Activated CD4-positive, alpha-beta T cell treated with anti-CD3 and anti-CD28 coated beads, Interleukin-2, amount 10 ng/mL, durations not matched to agents 7 days and 5 days (primary cell): ENCODE measurements at regions of chr1 and their contacts with region 1.

Region 1: DNA sequence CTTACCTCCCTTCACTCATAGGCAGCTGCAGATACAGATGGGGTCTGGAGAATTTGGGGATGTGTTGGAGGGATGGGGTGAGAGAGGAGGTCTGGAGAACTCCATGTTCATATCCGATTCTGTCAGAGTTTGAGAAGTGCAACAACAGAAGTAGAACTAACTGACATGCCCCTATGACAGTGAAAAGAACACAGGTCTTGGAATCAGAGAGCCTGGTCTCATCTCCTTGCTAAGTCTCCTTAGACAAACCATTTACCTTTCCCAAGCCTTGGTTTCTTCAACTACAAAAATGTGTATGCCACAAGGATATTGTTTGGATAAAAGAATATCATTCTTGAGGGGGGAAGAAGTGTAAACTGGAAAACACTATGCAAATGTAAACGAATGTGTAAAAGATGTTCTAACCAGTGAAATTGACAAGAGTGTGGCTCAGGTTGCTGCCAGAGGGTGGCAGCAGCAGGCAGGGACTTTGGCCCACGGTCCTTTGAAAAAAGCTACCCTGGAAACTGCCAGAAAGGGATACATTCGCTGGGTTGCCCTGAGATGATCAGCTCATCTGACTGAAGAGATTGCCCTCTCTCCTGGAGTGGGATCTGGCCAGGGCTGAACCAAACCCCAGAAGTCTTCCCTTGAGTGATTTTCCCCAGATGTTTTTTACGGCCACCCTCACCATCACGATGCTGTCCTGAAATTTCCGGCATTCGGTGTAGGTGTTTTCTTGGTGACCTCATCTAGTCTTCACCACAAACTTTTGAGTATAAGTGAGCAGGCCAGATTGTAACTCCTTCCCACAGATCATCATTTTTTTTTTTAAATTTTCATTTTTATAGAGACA is 17.0 kb upstream of the CD2 start:
- DNase-seq: peak; percentile 84
- H3K4me3 Mint-ChIP-seq: peak overlapping the region; percentile 55
- H3K27ac Mint-ChIP-seq: peak overlapping the region; percentile 93
- H3K4me1 Mint-ChIP-seq: peaks cover 58% of the 10 kb centered on the region
- H3K27me3 Mint-ChIP-seq: no peaks in the 10 kb centered on the region

Region 2: DNA sequence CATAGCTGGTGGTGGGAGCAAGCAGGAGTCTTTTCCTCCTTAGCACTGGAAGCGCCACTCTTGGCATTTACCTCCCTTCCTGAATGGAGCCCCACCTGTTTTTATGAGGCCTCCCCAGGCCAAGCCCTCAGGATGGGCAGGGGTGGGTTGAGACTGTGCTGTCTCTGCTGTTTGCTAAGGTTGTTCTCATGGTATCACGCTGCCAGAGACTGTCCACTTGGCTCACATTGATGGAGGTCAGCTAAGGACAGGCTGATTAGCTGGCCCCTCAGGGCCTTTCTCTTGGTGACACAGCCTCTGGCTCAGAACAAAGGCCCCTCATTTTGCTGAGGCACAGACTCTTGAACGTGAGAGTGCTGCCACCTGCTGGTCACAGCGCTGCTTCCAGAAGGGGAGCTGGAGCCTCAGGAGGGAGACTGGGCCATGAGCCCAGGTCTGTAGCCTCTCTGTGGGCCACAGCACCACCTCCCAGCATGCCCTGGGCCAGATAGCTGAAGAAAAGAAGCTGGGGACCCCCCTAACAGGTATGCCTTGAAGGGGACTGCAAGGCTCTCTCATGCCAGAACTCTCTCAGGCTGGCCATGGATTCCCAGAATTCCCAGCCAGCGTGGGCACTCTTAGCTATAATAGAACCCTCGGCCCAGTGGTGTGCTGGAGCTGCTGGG is 252.0 kb before region 1 on chr1:
- CTCF ChIA-PET with region 1: no interaction called
- POLR2A ChIA-PET with region 1: no interaction called
- DNase-seq: peak; percentile 88
- H3K4me3 Mint-ChIP-seq: no peak overlapping the region
- H3K27ac Mint-ChIP-seq: no peak overlapping the region
- H3K4me1 Mint-ChIP-seq: peaks cover 6% of the 10 kb centered on the region
- H3K27me3 Mint-ChIP-seq: peaks cover 3% of the 10 kb centered on the region

Region 3: DNA sequence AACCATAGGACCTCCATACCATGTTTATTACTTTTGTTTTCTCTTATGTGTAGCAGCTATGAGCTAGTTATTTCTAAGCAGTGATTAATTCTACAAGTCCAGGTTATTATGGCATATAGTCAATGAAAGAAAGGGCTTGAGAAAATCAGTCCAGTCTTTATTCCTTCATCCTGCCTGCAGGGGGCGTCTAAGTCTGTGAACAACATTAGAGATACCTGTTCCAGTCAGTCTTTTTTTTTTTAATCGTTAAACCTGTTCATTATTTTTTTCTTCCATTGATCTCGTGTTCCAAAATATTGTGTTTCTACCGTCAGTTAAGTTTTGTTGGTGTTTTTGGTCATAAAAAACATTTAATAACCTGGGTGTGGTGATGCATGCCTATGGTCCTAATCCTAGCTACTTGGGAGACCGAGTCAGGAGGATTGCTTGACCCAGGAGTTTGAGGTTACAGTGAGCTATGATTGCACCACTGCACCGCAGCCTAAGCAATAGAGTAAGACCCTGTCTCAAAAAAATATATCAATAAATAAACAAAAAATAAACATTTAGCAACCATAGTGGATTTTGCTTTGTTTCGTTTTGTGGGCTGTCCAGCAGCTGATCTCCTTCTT is 12.4 kb before region 1 on chr1:
- CTCF ChIA-PET with region 1: interaction called, 46 read pairs
- POLR2A ChIA-PET with region 1: no interaction called
- DNase-seq: peak; percentile 90
- H3K4me3 Mint-ChIP-seq: no peak overlapping the region
- H3K27ac Mint-ChIP-seq: no peak overlapping the region
- H3K4me1 Mint-ChIP-seq: peaks cover 23% of the 10 kb centered on the region
- H3K27me3 Mint-ChIP-seq: no peaks in the 10 kb centered on the region

Region 4: DNA sequence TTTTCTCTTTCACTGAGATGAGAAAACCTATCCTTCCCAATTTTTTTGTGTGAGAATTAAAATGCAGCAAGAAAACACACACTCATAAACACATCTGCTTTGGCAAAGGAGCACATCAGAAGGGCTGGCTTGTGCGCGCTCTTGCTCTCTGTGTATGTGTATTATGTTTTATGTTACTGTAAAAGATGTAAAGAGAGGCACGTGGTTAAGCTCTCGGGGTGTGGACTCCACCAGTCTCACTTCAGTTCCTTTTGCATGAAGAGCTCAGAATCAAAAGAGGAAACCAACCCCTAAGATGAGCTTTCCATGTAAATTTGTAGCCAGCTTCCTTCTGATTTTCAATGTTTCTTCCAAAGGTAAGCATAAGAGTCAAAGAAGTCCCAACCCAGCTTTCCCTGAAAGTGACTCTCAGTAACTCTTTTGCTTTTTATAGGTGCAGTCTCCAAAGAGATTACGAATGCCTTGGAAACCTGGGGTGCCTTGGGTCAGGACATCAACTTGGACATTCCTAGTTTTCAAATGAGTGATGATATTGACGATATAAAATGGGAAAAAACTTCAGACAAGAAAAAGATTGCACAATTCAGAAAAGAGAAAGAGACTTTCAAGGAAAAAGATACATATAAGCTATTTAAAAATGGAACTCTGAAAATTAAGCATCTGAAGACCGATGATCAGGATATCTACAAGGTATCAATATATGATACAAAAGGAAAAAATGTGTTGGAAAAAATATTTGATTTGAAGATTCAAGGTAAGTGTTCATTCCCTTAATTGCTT is 17.2 kb after region 1 on chr1 and contains the start of gene CD2:
- CTCF ChIA-PET with region 1: interaction called, 38 read pairs
- POLR2A ChIA-PET with region 1: interaction called, 38 read pairs
- DNase-seq: peak; percentile 78
- H3K4me3 Mint-ChIP-seq: peak within 1 kb of the TSS; percentile 95
- H3K27ac Mint-ChIP-seq: peak within 1 kb of the TSS; percentile 95
- H3K4me1 Mint-ChIP-seq: peaks cover 36% of the 10 kb centered on the region
- H3K27me3 Mint-ChIP-seq: no peaks in the 10 kb centered on the region
- total RNA-seq, gene CD2: 206 to 258 TPM

Region 5: DNA sequence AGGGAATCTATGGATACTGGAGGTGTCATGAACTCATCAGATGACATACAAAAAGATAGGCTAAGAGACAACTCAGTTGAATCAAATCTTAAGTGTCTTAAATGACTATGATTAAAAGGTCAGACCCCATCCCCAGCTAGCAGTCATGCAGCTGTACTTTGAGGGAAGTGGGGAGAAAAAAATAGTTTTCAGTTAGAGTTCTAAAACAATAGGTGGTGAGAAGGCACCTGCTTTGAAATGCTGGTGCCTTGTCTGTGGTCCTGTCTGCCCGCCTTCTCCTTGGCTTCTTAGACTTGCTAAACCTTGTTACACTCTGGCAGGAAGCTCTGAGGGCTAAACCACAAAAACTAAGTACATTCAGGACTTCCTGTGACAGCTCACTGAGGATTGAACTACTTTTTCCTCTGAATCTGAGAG is 32.3 kb after region 1 on chr1:
- CTCF ChIA-PET with region 1: interaction called, 58 read pairs
- POLR2A ChIA-PET with region 1: interaction called, 46 read pairs
- DNase-seq: peak; percentile 89
- H3K4me3 Mint-ChIP-seq: peak overlapping the region; percentile 61
- H3K27ac Mint-ChIP-seq: peak overlapping the region; percentile 96
- H3K4me1 Mint-ChIP-seq: peaks cover 92% of the 10 kb centered on the region
- H3K27me3 Mint-ChIP-seq: no peaks in the 10 kb centered on the region

Region 6: GRCh38 chr1:116817582-116818064 is 80.4 kb after region 1 on chr1:
- CTCF ChIA-PET with region 1: interaction called, 21 read pairs
- POLR2A ChIA-PET with region 1: interaction called, 6 read pairs
- DNase-seq: peak; percentile 80
- H3K4me3 Mint-ChIP-seq: peak overlapping the region; percentile 27
- H3K27ac Mint-ChIP-seq: peak overlapping the region; percentile 90
- H3K4me1 Mint-ChIP-seq: peaks cover 62% of the 10 kb centered on the region
- H3K27me3 Mint-ChIP-seq: no peaks in the 10 kb centered on the region

Region 7: GRCh38 chr1:116877141-116877818 is 140.0 kb after region 1 on chr1:
- CTCF ChIA-PET with region 1: interaction called, 13 read pairs
- POLR2A ChIA-PET with region 1: interaction called, 3 read pairs
- DNase-seq: no peak
- H3K4me3 Mint-ChIP-seq: no peak overlapping the region
- H3K27ac Mint-ChIP-seq: no peak overlapping the region
- H3K4me1 Mint-ChIP-seq: peaks cover 21% of the 10 kb centered on the region
- H3K27me3 Mint-ChIP-seq: no peaks in the 10 kb centered on the region